ENCODE measurements at regions of chr1 and their contacts with region 1.

Region 1: GRCh38 chr1:209937996-209938959 is at the start of gene SYT14:
- DNase-seq: no peak
- H3K4me3 Mint-ChIP-seq: peak within 1 kb of the TSS; percentile 63
- H3K27ac Mint-ChIP-seq: no peak within 1 kb of the TSS
- H3K4me1 Mint-ChIP-seq: peaks cover 5% of the 10 kb centered on the region
- H3K27me3 Mint-ChIP-seq: peaks cover 68% of the 10 kb centered on the region
- total RNA-seq, gene SYT14: not detected in 2 replicates

Region 2: DNA sequence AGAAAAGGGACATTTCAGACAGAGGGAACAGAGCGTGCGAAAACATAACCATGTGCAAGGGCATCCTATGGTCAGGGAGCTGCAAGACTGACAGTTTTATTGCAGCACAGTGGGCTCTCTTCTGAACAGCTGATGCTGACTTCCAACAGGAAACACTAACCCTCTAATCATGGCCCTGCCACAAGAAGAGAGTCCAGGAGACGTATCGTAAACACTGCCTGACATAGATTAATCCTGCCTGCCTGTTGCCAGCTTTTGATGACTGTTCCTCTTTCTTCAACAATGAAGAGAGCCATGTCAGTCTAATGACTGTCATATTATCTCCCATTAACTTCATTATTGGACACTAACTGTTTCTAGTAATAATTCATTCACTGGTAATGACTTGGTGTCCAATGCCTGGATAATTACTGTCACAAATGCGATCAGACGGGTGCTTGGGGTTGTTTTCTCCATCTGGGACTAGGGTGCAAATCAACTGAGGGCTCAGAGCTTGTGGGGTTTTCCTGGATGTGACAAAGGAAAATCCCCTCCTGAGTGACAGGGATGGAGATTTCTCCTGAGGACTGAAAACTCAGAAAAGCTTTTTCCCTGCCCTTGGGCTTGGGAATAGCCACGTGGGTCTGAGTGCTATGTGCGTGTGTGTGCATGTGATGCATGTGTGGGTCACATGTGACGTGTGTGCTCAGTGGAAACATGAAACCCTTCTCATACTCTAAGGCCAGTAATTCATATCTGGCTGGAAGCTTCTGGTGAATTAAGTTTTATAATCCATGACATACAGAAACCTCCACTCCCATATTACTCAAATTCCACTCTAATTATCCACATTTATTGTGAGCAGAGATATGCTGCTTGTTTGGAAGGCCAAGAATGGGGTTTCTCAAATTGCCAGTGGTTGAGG is 1550.1 kb before region 1 on chr1:
- intact Hi-C with region 1: no loop called
- DNase-seq: no peak
- H3K4me3 Mint-ChIP-seq: no peak overlapping the region
- H3K27ac Mint-ChIP-seq: no peak overlapping the region
- H3K4me1 Mint-ChIP-seq: no peaks in the 10 kb centered on the region
- H3K27me3 Mint-ChIP-seq: peaks cover 2% of the 10 kb centered on the region

Region 3: GRCh38 chr1:209884665-209885117 is 53.6 kb before region 1 on chr1:
- intact Hi-C with region 1: loop called (anchors 1 kb)
- DNase-seq: peak; percentile 22
- H3K4me3 Mint-ChIP-seq: no peak overlapping the region
- H3K27ac Mint-ChIP-seq: peak overlapping the region; percentile 46
- H3K4me1 Mint-ChIP-seq: peaks cover 16% of the 10 kb centered on the region
- H3K27me3 Mint-ChIP-seq: peaks cover 35% of the 10 kb centered on the region

Region 4: DNA sequence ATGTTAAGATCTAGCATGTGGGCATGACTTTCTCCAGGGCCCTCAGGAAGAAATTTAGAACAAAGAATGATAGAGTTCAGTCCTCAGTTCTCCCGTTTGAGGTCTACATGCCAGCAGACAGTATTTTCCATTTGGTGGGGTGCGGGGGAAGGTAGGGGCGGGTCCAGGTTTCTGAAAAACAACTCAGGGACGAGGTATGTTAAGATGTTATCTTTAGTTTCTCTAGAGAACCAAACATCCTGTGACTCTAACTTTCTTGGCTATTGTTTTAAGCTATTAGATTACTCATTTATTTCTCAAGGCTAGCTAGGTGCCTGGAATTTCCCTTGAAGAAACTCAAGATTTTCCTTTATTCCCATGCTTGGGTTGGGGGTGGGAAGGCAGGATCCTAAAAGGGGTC is 42.6 kb before region 1 on chr1:
- intact Hi-C with region 1: loop called (anchors 2 kb)
- DNase-seq: no peak
- H3K4me3 Mint-ChIP-seq: no peak overlapping the region
- H3K27ac Mint-ChIP-seq: peak overlapping the region; percentile 70
- H3K4me1 Mint-ChIP-seq: peaks cover 16% of the 10 kb centered on the region
- H3K27me3 Mint-ChIP-seq: peaks cover 6% of the 10 kb centered on the region

Region 5: GRCh38 chr1:210311726-210312493 is 373.6 kb after region 1 on chr1:
- intact Hi-C with region 1: loop called (anchors 10 kb)
- DNase-seq: no peak
- H3K4me3 Mint-ChIP-seq: no peak overlapping the region
- H3K27ac Mint-ChIP-seq: no peak overlapping the region
- H3K4me1 Mint-ChIP-seq: peaks cover 3% of the 10 kb centered on the region
- H3K27me3 Mint-ChIP-seq: peaks cover 41% of the 10 kb centered on the region